A673 (cell line): ENCODE measurements at regions of chr4 and their contacts with region 1.

Region 1: GRCh38 chr4:24770032-24770584 is 25.3 kb upstream of the SOD3 start:
- DNase-seq: peak; percentile 60
- H3K4me3 ChIP-seq: no peak overlapping the region
- H3K27ac ChIP-seq: no peak overlapping the region
- H3K4me1 ChIP-seq: peaks cover 20% of the 10 kb centered on the region
- H3K27me3 ChIP-seq: no peaks in the 10 kb centered on the region
- CTCF ChIP-seq: no peak

Region 2: DNA sequence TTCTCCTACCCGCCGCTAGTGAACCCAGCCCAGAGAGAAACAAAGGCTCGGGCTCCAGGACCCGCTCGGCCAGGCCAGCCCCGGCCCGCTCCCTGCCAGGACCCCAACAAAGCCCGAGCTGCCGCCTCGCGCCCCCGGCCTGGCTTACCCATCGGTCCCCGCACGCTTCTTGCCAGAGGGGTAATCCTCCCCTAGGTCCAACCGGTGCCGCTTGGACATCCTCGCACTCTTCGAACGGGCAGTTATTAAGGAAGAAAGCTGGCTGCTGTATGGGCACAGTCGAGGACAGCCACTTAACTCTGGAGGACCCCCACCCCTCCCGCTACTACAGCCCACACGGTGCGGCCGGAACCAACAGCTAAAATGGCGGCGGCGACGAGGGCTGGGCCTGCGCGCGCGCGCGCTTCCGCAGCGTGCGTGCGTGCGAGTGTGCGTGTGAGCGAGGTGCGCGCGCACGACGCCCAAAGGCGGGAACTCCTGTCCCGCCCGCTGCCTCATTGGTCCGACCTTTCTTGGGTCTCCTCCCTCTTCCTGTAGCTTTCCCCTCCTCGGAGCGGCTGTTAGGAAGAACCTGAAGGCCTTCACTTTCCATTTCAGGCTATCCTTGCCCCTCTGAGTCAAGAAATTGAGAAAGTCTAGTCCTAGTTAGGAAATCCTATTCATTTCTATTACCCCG is 185.8 kb before region 1 on chr4 and contains the start of gene DHX15:
- CTCF ChIA-PET with region 1: no interaction called
- POLR2A ChIA-PET with region 1: no interaction called
- intact Hi-C with region 1: loop called (anchors 10 kb)
- DNase-seq: peak; percentile 97
- H3K4me3 ChIP-seq: peak within 1 kb of the TSS; percentile 99
- H3K27ac ChIP-seq: peak within 1 kb of the TSS; percentile 99
- H3K4me1 ChIP-seq: peaks cover 5% of the 10 kb centered on the region
- H3K27me3 ChIP-seq: no peaks in the 10 kb centered on the region
- CTCF ChIP-seq: no peak
- total RNA-seq, gene DHX15: 201 and 229 TPM in 2 replicates

Region 3: DNA sequence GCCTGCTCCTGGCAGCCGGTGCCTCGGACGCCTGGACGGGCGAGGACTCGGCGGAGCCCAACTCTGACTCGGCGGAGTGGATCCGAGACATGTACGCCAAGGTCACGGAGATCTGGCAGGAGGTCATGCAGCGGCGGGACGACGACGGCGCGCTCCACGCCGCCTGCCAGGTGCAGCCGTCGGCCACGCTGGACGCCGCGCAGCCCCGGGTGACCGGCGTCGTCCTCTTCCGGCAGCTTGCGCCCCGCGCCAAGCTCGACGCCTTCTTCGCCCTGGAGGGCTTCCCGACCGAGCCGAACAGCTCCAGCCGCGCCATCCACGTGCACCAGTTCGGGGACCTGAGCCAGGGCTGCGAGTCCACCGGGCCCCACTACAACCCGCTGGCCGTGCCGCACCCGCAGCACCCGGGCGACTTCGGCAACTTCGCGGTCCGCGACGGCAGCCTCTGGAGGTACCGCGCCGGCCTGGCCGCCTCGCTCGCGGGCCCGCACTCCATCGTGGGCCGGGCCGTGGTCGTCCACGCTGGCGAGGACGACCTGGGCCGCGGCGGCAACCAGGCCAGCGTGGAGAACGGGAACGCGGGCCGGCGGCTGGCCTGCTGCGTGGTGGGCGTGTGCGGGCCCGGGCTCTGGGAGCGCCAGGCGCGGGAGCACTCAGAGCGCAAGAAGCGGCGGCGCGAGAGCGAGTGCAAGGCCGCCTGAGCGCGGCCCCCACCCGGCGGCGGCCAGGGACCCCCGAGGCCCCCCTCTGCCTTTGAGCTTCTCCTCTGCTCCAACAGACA is 29.6 kb after region 1 on chr4:
- CTCF ChIA-PET with region 1: no interaction called
- POLR2A ChIA-PET with region 1: no interaction called
- intact Hi-C with region 1: no loop called
- DNase-seq: no peak
- H3K4me3 ChIP-seq: no peak overlapping the region
- H3K27ac ChIP-seq: no peak overlapping the region
- H3K4me1 ChIP-seq: peaks cover 9% of the 10 kb centered on the region
- H3K27me3 ChIP-seq: peaks cover 69% of the 10 kb centered on the region
- CTCF ChIP-seq: no peak